ENCODE measurements at regions of chr1 and their contacts with region 1.

Region 1: GRCh38 chr1:87335175-87335884 is 6.7 kb downstream of the LMO4 start:
- DNase-seq: peak; percentile 85 to 91
- ATAC-seq: peak; percentile 21
- H3K4me3 ChIP-seq: peak overlapping the region; percentile 85 to 86
- H3K27ac ChIP-seq: peak overlapping the region in 1 of 2 donors; percentile 52
- H3K4me1 ChIP-seq: peaks cover 0 to 16% of the 10 kb centered on the region in 2 donors
- H3K27me3 ChIP-seq: no peaks in the 10 kb centered on the region

Region 2: DNA sequence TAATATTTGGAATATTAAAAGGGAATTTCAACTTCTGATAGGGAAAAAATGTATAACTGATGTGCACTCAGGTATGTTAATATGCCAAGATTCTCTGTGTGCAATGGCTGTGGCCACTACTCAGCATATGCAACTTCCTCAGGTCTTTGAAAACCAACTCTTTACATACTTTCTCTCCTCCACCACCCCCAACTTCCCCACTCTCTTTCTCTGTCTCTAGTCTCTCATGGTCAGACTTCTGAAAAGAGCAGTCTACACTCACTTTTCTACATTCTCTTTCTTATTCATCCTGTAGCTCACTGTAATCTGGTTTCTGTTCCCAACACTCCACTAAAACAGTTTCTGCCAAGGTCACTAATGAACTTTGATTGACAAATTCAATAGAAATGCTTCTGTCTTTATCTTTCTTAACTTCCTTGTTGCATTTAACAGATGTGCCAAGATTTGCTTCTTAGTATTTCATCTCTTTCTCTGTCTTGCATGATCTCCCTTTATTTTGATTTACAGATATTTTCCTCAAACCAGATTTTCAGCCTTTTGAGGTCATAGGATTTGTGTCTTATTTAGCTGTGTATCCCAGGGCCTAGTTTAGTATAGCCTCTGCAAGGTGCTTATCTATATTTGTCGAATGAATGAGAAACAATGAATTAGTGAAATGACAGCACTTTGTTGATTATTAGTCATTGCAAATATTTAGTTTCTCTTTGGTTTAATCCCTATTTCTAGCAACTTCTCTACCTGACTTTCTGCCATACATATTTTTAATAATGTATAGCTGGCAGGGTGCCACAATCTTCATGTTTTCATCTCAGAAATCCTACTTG is 162.3 kb after region 1 on chr1:
- intact Hi-C with region 1: loop called in 1 of 2 experiments (anchors 10 kb)
- DNase-seq: no peak
- ATAC-seq: no peak
- H3K4me3 ChIP-seq: no peak overlapping the region
- H3K27ac ChIP-seq: no peak overlapping the region
- H3K4me1 ChIP-seq: peaks cover 0 to 2% of the 10 kb centered on the region in 2 donors
- H3K27me3 ChIP-seq: no peaks in the 10 kb centered on the region

Region 3: GRCh38 chr1:87523466-87523865 is 188.1 kb after region 1 on chr1:
- intact Hi-C with region 1: loop called in 1 of 2 experiments (anchors 10 kb)
- DNase-seq: peak in 1 of 2 donors; percentile 78
- ATAC-seq: peak; percentile 87
- H3K4me3 ChIP-seq: no peak overlapping the region
- H3K27ac ChIP-seq: peak overlapping the region; percentile 58 to 87
- H3K4me1 ChIP-seq: peaks cover 0 to 6% of the 10 kb centered on the region in 2 donors
- H3K27me3 ChIP-seq: peaks cover 0 to 1% of the 10 kb centered on the region in 2 donors

Region 4: DNA sequence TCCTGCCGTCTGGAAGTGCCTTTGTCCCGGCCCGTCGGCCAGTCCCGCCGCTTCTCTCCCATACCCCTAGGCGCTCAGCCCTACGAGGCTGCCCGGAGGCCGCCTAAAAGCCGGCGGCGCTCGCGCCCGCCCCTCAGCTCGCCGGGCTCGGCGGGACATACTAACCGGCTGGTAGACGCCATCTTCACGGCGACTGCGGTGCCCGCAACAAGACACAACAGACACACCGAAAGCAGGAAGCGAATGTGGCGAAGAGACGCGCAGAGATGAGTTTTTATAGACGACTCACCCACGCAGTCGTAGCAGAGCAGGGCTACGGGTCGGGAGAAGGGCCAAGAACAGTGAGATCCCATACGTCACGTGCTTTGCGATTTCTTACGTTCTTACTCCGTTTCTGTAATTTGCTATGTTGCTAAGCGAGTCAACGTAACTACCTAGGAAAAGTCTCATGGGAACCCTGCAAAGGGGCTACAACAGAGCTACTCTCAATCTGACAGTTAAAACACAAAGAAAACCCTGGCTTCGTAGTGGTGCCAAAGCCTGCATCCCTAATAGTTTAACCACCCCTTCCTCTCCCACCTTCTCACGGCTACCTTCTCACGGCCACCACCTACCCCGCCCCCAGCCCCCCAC is 1556.1 kb after region 1 on chr1 and contains the start of gene GTF2B:
- intact Hi-C with region 1: loop called in 1 of 2 experiments (anchors 10 kb)
- DNase-seq: peak; percentile 95 to 96
- ATAC-seq: peak; percentile 96
- H3K4me3 ChIP-seq: peak within 1 kb of the TSS; percentile 77 to 99
- H3K27ac ChIP-seq: peak within 1 kb of the TSS; percentile 20 to 81
- H3K4me1 ChIP-seq: peaks cover 0 to 7% of the 10 kb centered on the region in 2 donors
- H3K27me3 ChIP-seq: no peaks in the 10 kb centered on the region
- total RNA-seq, gene GTF2B: 20.9 to 24.7 TPM